ENCODE measurements at regions of chr10 and their contacts with region 1.

Region 1: DNA sequence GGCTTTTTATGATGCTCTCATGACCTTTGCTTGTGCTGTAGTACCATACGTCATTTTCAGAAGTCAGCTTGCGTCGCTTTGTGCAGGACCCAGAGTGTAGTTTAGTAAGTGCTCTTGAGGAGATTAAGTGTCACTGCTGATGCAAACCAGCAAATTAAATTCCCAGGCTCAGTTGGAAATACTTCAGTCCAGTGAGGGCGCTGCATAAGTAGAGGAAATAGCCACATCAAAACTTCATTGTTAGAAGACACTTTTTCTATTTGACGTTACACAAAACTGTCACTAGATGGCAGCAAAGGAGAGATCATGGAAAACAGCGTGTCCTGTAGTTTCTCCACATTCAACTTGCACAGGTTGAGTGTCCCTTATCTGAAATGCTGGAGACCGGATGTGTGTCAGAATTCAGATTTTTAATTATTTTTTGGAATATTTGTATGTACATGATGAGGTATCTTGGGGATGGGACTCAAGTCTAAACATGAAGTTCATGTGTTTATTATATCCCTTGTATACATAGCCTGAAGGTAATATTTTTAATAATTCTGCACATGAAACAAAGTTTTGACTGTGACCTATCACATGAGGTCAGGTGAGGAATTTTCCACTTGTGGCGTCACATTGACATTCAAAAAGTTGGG is 7.9 kb downstream of the ZNF22 start:
- DNase-seq: peak in 13 of 42 donors; percentile 35 to 83 (median 55)

Region 2: GRCh38 chr10:44878706-44879530 is 129.7 kb before region 1 on chr10:
- intact Hi-C with region 1: no loop called
- DNase-seq: peak; percentile 83 to 97 (median 93)

Region 3: DNA sequence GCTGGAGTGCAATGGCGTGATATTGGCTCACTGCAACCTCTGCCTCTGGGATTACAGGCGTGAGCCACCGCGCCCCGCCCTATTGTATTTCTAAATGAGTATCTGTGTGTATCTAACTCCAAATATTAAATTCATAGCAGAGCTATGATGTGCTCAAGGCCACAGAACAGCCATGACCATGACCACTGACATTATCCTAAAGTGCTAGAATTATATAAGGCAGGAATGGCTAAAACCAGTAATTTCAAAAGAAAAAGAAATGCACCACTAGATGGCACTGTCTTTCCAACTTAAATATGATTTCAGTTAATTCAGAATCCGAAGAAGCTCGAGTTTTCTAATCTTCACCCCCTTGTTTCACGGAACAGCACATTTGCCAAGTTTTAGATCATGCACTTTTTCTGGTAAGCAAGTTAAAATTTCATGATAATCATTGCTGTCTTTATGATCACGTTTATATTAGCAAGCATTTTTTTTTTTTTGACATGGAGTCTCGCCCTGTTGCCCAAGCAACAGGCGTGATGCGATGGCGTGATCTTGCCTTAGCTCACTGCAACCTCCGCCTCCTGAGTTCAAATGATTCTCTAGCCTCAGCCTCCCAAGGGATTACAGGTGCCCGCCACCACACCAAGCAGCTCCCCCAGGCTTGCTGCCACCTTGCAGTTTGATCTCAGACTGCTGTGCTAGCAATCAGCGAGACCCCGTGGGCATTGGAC is 241.5 kb after region 1 on chr10:
- intact Hi-C with region 1: loop called (anchors 10 kb)
- DNase-seq: peak in 17 of 42 donors; percentile 5 to 54 (median 17)

Measured in head of caudate nucleus (tissue), 42 donors.